A673 (cell line): ENCODE measurements at regions of chr17 and their contacts with region 1.

Region 1: DNA sequence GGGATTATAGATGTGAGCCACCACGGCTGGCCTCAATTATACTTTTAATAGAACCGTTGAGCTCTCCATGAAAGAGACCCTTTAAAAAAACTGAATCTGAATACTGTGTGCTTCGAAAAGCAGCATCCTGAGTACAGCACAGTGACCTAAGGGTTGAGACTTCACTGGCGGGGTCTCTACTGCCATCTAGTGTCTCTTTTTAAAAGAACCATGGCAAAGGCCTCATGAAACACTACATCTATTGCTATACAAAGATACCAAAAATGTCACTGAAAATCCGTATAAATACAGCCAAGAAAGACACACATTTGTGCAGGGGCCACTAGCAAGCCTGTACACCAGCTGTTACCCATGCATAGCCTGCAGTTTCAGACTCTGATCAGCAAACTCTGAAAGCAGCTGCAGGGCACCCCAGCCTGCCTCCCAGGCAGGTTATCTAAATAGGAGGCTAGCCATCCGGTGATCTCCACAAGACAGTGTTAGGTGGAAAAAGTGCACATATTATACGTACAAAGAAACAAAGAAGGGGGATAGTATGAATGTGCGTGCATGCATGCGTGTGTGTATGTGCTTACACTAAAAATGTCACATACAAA is 35.3 kb downstream of the NPLOC4 start:
- DNase-seq: peak; percentile 87
- H3K4me3 ChIP-seq: no peak overlapping the region
- H3K27ac ChIP-seq: no peak overlapping the region
- H3K4me1 ChIP-seq: peaks cover 4% of the 10 kb centered on the region
- H3K27me3 ChIP-seq: no peaks in the 10 kb centered on the region
- CTCF ChIP-seq: peak; percentile 84

Region 2: DNA sequence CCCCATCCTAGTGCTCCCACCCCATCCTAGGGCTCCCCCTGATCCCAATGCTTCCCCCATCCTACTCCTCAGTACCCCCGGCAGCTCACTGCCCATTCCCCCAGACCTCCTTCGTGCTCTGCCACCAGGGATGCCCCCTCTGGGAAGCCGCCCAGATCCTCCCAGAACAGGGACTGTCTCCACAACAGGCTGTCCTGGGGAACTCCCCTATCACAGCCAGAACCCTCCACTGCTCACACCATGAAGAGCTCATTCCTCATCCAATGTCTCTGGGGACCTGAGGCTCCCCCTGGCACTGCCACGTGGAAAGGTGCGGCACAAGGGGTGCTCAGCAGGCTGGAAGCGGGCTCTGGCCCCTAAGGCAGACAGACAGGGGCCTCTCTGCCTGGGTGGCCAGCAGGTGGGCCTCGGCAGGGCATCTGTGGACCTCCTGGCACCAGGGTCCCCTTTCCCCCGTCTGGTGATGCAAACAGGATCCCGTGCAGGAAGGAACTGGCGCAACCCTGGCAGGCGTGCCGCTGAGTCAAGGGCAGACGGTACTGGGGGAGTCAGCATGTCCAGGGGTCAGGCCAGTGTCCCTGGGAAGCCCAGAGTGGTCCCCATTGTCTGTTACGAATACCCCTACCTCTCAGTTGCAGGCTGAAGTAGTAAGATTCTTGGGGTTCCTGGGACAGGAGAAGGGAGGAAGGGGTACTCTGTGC is 451.1 kb before region 1 on chr17:
- CTCF ChIA-PET with region 1: no interaction called
- POLR2A ChIA-PET with region 1: interaction called, 13 read pairs
- intact Hi-C with region 1: no loop called
- DNase-seq: no peak
- H3K4me3 ChIP-seq: no peak overlapping the region
- H3K27ac ChIP-seq: no peak overlapping the region
- H3K4me1 ChIP-seq: peaks cover 11% of the 10 kb centered on the region
- H3K27me3 ChIP-seq: no peaks in the 10 kb centered on the region
- CTCF ChIP-seq: no peak

Region 3: GRCh38 chr17:81253358-81254131 is 348.1 kb before region 1 on chr17:
- CTCF ChIA-PET with region 1: no interaction called
- POLR2A ChIA-PET with region 1: no interaction called
- intact Hi-C with region 1: loop called (anchors 2 kb)
- DNase-seq: peak; percentile 59
- H3K4me3 ChIP-seq: no peak overlapping the region
- H3K27ac ChIP-seq: no peak overlapping the region
- H3K4me1 ChIP-seq: peaks cover 29% of the 10 kb centered on the region
- H3K27me3 ChIP-seq: no peaks in the 10 kb centered on the region
- CTCF ChIP-seq: peak; percentile 82

Region 4: DNA sequence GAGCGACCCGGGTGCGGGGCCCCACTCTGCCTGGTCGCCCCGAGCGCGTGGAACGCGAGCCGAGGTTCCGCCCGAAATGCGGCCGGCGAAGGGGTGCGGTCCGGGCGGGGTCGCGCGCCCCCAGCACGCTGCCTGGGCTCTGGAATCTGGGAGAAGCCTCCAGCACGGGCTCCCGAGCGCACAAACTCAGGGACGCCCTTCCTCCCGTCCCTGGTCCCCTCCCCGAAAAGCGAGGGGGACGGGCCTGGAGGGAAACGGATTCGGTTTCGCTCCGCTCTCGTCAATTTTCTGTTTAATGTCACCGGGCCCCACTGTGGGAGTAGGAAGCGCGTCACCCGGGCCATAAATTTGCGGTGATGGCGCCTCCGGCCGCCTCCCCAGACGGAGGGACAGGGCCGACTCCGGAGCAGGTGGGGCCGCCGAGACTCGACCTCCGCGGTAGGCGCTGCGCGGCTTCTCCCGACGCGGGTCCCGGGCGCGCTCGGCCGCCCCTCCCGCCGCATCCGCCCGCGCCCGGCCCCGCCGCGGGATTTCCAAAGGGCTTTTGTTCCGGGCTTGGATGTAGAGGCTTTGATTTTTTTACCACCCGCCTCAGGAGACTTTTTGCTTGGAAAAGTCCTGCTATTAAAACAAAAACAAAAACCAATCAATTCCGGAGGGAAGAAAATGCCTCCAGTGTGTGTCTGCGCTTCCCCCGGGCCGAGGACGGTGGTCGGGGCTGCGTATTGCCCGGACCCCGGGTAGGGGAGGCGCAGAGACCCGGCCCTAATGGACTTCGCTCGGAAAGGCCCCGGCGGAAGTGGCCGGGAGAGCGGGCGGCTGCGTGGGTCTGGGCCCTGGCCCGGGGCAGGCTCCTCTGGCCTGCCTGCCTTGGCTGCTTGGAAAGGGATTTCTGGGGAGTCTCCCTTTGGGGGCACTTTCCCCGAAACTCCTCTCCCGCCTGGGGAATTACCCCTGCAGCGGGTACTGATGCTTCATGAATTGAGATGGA is 214.2 kb before region 1 on chr17:
- CTCF ChIA-PET with region 1: no interaction called
- POLR2A ChIA-PET with region 1: no interaction called
- intact Hi-C with region 1: no loop called
- DNase-seq: peak; percentile 86
- H3K4me3 ChIP-seq: peak overlapping the region; percentile 62
- H3K27ac ChIP-seq: peak overlapping the region; percentile 92
- H3K4me1 ChIP-seq: peaks cover 61% of the 10 kb centered on the region
- H3K27me3 ChIP-seq: no peaks in the 10 kb centered on the region
- CTCF ChIP-seq: no peak

Region 5: DNA sequence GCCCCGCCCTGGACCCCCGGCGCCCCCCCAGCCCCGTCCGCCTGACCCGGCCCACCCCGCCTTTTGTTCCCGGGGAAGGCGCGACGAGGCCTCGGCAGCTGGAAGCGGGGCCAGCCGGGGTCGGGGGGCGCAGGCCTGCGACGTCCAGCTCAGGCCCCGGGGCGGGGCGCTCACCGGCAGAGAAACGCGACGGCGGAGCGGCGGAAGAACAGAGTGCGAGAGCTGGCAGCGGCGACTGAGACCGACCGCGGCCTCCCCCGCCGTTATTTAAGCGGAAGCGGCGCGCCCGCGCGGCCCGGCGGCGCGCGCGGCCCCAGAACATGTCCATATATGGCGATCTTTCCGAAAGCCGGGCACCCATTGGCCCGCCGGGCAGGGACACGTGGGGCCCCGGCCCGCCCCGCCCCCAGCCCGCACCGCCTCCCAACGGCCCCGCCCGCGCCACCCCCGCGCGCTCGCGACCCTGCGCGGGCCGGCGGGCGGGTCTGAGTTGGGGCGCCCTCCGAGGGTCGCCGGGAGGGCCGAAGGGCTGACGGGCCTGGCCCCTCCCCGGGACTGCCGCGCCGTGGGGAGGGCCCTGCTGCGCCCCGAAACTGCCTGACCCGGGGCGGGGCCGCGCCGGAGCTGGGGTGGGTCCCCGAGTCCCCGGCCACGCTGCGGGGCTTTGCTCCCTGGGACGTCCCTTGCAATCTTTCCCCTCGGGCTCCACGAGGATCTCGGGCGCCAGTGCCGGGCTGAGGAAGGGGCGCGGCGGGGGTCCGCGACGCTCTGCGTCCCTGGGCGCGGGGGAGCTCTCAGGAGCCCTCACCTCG is 88.9 kb before region 1 on chr17 and contains the start of gene ACTG1:
- CTCF ChIA-PET with region 1: no interaction called
- POLR2A ChIA-PET with region 1: no interaction called
- intact Hi-C with region 1: loop called (anchors 10 kb)
- DNase-seq: peak; percentile 95
- H3K4me3 ChIP-seq: peak within 1 kb of the TSS; percentile 79
- H3K27ac ChIP-seq: peak within 1 kb of the TSS; percentile 99
- H3K4me1 ChIP-seq: peaks cover 26% of the 10 kb centered on the region
- H3K27me3 ChIP-seq: no peaks in the 10 kb centered on the region
- CTCF ChIP-seq: no peak
- total RNA-seq, gene ACTG1: 2,855 and 3,247 TPM in 2 replicates

Region 6: GRCh38 chr17:81722184-81723120 is 120.8 kb after region 1 on chr17:
- CTCF ChIA-PET with region 1: no interaction called
- POLR2A ChIA-PET with region 1: no interaction called
- intact Hi-C with region 1: no loop called
- DNase-seq: no peak
- H3K4me3 ChIP-seq: no peak overlapping the region
- H3K27ac ChIP-seq: no peak overlapping the region
- H3K4me1 ChIP-seq: peaks cover 11% of the 10 kb centered on the region
- H3K27me3 ChIP-seq: no peaks in the 10 kb centered on the region
- CTCF ChIP-seq: no peak